A549 (cell line): ENCODE measurements at regions of chr12 and their contacts with region 1.

Region 1: DNA sequence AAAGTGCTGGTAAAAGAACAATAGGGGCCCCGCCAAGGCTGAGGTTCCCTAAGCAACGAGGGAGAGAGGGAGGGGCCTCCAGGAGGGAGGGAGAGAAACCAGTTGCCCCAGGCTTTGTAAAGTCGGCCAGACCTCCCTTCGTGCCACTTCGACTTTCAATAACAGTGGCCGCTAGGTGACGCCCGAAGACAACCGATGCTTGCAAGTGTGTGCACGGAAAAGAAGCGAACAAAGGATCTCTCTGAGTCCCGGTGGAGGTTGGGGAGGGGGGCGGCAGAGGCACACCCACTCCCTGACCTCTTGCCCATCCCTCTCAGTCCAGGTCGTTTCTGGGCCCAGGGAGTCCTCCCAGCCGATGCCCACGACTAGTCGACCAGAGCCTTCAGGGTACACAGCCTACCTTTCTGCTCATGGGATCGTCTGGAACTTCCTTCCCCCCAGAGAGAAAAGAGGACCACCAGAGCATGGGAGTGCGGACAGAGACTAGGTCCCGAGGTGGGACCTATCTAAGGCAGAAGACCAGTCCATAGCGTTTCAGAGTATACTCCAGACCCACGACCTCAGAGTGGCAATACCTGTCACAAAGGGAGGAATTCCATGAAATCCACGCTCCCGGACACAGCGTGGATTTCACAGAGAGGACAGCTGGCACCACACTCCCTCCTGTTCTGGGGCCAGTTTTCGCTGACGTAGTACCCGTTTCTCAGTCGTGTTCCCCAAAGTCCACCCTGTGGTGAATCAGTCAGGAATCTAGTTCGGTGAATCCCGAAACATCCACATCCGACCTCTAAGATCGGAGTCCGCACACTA is 262.7 kb upstream of the ALG10B start:
- DNase-seq: peak; percentile 43 to 85
- ATAC-seq: peak; percentile 20 to 68; a peak in 4 of 6 replicates
- H3K4me3 ChIP-seq: no peak overlapping the region
- H3K27ac ChIP-seq: peak overlapping the region; percentile 39 to 80; a peak in 4 of 6 replicates
- H3K4me1 ChIP-seq: peaks cover 14% of the 10 kb centered on the region
- CTCF ChIP-seq: peak; percentile 73
- EP300 ChIP-seq: no peak
- POLR2A ChIP-seq: no peak
- RAD21 ChIP-seq: peak; percentile 94 to 99

Region 2: DNA sequence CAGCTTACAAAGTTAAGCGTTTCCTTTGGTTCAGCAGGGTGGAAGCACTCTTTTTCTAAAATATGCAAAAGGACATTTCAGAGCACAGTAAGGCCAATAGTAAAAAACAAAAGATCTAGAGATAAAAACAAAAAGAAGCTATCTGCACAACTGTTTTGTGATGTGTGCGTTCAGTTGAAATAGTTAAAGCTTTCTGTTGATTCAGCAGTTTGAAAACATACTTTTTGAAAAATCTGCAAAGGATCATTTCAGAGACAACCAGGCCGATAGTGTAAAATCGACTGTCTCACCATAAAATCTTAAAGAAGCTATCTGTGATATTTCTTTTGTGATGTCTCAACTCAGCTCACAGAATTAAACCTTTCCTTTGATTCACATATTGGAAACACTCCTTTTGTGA is 37.3 kb before region 1 on chr12:
- CTCF ChIA-PET with region 1: no interaction called
- POLR2A ChIA-PET with region 1: no interaction called
- DNase-seq: no peak
- ATAC-seq: no peak
- H3K4me3 ChIP-seq: no peak overlapping the region
- H3K27ac ChIP-seq: no peak overlapping the region
- H3K4me1 ChIP-seq: no peaks in the 10 kb centered on the region
- CTCF ChIP-seq: no peak
- EP300 ChIP-seq: no peak
- POLR2A ChIP-seq: no peak
- RAD21 ChIP-seq: no peak

Region 3: DNA sequence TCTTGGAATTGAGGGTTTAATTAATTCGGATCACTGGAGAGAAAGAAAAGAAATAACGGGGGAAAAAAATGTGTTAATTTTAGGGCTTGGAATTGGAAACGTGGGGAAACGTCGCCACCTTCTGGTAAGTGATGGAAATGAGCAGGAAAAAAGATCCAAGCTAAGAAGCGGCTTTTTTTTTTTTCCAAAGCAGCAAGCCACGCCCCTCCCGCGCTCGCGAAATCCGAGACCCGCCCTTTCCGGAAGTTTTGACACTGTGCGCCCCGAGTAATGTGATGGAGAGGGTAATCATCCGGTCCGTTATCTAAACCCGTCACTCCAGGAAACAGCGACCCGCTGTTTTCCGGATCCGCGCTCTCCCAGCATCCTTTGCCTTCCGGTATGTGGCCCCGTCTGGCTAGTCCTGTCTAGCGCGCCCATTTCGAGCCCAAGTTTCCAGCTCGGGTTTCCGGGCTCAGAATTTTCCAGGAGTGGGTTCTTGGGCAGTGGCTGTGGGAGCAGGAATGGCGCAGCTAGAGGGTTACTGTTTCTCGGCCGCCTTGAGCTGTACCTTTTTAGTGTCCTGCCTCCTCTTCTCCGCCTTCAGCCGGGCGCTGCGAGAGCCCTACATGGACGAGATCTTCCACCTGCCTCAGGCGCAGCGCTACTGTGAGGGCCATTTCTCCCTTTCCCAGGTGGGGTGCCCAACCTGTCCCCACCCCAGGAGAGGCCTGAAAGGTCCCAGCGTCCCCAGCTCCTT is 262.7 kb after region 1 on chr12 and contains the start of gene ALG10B:
- CTCF ChIA-PET with region 1: interaction called, 9 read pairs
- POLR2A ChIA-PET with region 1: interaction called, 17 read pairs
- DNase-seq: peak; percentile 81 to 98
- ATAC-seq: peak; percentile 100
- H3K4me3 ChIP-seq: peak within 1 kb of the TSS; percentile 80
- H3K27ac ChIP-seq: peak within 1 kb of the TSS; percentile 83 to 96
- H3K4me1 ChIP-seq: peaks cover 3% of the 10 kb centered on the region; the same call in 1 of the 3 replicates
- CTCF ChIP-seq: peak; percentile 80
- EP300 ChIP-seq: no peak
- POLR2A ChIP-seq: peak; percentile 43
- RAD21 ChIP-seq: peak; percentile 88 to 94
- polyA plus RNA-seq, gene ALG10B: 10.5 and 15.2 TPM in 2 replicates